ENCODE measurements at regions of chr17 and their contacts with region 1.

Region 1: GRCh38 chr17:32783602-32784001 is 93.3 kb downstream of the MYO1D start:
- DNase-seq: peak; percentile 43
- H3K4me3 ChIP-seq: no peak overlapping the region
- H3K27ac ChIP-seq: no peak overlapping the region
- H3K4me1 ChIP-seq: no peaks in the 10 kb centered on the region
- H3K27me3 ChIP-seq: no peaks in the 10 kb centered on the region
- CTCF ChIP-seq: peak; percentile 56 to 63

Region 2: DNA sequence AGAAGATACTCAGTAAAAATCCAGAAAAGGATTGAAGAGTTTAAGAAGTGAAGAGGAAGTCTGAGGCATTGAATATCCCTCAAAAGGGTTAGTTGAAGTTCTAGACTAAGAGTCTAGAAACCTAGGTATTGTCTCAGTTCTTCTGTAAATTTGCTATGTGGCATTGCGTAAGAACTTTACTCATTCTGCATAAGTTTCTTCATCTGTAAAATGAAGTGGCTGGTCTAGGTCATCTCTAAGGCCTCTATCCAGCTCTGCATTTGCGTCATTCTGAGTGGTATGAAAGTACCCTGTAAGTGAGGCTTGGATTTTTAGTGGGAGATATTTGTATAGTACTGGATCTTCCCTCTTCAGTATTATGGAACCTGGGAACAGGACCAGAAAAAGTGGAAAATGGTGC is 36.9 kb before region 1 on chr17:
- CTCF ChIA-PET with region 1: no interaction called
- dilution Hi-C with region 1: no loop called
- in situ Hi-C with region 1: no loop called
- intact Hi-C with region 1: no loop called
- DNase-seq: peak; percentile 47
- H3K4me3 ChIP-seq: no peak overlapping the region
- H3K27ac ChIP-seq: no peak overlapping the region
- H3K4me1 ChIP-seq: peaks cover 11% of the 10 kb centered on the region
- H3K27me3 ChIP-seq: no peaks in the 10 kb centered on the region
- CTCF ChIP-seq: no peak

Region 3: GRCh38 chr17:32840241-32840640 is 56.6 kb after region 1 on chr17:
- CTCF ChIA-PET with region 1: no interaction called
- dilution Hi-C with region 1: no loop called
- in situ Hi-C with region 1: no loop called
- intact Hi-C with region 1: no loop called
- DNase-seq: no peak
- H3K4me3 ChIP-seq: no peak overlapping the region
- H3K27ac ChIP-seq: no peak overlapping the region
- H3K4me1 ChIP-seq: no peaks in the 10 kb centered on the region
- H3K27me3 ChIP-seq: no peaks in the 10 kb centered on the region
- CTCF ChIP-seq: no peak

Region 4: DNA sequence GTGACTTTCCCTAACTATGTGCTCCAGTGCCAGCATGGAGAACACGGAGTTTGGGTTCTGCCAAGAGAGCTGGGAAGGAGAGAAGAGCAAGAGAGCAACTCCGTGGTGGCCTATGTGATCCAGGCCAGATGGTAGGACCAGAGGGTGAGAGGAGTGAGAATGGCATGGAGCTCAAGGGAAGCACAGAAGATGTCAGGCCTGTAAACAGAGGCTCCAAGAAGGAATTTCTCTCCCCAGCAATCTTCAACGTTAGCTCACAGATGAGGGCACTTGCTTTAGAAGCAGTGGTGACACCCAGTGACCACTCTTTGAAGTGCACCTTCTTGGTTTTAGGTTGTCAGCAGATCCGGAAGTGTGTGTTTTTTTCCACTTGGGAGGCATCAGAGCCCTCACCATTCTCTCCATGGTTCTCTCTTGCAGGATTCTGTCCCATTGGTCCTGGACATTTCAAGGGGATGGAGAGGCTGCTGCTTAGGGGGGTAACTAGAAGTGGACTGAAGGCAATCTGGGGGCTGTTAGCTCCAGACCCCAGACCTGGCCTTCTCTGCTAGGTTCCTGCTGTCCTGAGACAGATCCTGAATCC is 126.3 kb after region 1 on chr17:
- CTCF ChIA-PET with region 1: interaction called, 10 read pairs
- dilution Hi-C with region 1: no loop called
- in situ Hi-C with region 1: loop called in 1 of 2 experiments (anchors 5 kb)
- intact Hi-C with region 1: loop called (anchors 1 kb)
- DNase-seq: peak; percentile 69
- H3K4me3 ChIP-seq: no peak overlapping the region
- H3K27ac ChIP-seq: no peak overlapping the region
- H3K4me1 ChIP-seq: no peaks in the 10 kb centered on the region
- H3K27me3 ChIP-seq: no peaks in the 10 kb centered on the region
- CTCF ChIP-seq: peak; percentile 87 to 88

Measured in mammary epithelial cell (primary cell).